ENCODE measurements at regions of chr2 and their contacts with region 1.

Region 1: DNA sequence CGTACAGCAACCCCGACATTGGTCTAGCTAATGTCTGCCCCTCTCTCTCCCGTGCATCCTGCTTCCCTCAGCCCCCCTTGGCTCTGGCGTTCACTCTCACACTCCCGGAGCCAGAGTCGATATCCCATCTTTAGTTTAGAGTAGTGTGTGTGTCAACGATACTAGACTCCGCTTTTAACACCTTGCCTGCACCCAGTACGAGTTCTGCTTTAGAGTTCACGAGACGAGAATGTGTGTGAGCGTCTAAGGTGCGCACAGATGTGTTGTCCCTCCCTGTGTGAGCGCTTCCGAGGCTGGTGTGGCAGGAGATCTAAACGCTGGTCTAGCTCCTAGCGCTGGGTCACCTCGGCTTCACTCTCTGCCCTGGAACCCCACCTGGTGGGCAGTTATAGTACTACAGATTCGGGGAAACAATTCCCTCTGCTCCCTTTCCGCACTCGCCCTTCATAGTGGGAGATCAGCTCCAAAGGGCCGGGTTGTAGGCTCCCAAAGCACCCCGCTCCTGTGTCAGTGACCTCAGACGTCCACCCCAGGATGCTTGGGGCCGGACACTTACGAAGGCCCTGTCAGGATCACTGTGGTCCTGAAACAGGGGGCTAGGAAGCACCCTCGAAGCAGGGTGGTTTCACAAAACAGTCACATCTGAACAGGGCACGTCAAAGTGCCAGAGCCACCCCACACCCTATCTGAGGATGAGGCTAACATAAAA is 2.6 kb upstream of the CYP26B1 start:
- DNase-seq: peak; percentile 95
- H3K4me3 ChIP-seq: peak overlapping the region; percentile 52 to 61 (median 56)
- H3K27ac ChIP-seq: no peak overlapping the region
- H3K4me1 ChIP-seq: peaks cover 40 to 52% (median 49%) of the 10 kb centered on the region in 4 donors
- H3K27me3 ChIP-seq: peaks cover 11 to 85% (median 40%) of the 10 kb centered on the region in 4 donors
- CTCF ChIP-seq: peak; percentile 86 to 91 (median 88)
- EP300 ChIP-seq: no peak
- POLR2A ChIP-seq: no peak

Region 2: GRCh38 chr2:71545572-71546274 is 604.6 kb before region 1 on chr2:
- intact Hi-C with region 1: loop called (anchors 5 kb)
- DNase-seq: no peak
- H3K4me3 ChIP-seq: peak overlapping the region in 2 of 4 donors; percentile 23 to 32
- H3K27ac ChIP-seq: peak overlapping the region in 3 of 4 donors; percentile 26 to 55 (median 50)
- H3K4me1 ChIP-seq: peaks cover 3 to 13% (median 10%) of the 10 kb centered on the region in 4 donors
- H3K27me3 ChIP-seq: no peaks in the 10 kb centered on the region
- CTCF ChIP-seq: peak; percentile 55 to 67 (median 57)
- EP300 ChIP-seq: no peak
- POLR2A ChIP-seq: no peak

Region 3: DNA sequence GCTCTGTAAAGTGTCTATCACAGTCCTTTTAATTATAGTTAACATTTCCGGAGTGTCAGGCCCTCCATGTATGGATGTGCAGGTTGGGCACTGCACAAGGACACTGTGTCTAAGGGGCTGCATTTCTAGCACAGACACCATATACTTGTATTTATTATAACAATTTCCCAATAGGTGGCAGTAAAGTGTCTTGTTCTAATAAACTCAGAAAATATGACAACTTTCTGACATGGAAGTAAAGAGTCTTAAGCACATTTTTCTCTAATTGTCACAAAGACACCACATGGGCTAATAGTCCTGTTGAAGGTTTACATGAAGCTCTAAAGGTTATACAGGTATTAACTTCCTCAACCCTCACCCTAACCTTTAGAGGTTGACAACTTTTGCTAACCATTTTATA is 540.4 kb before region 1 on chr2:
- intact Hi-C with region 1: loop called (anchors 5 kb)
- DNase-seq: no peak
- H3K4me3 ChIP-seq: no peak overlapping the region
- H3K27ac ChIP-seq: no peak overlapping the region
- H3K4me1 ChIP-seq: peaks cover 17 to 24% (median 21%) of the 10 kb centered on the region in 4 donors
- H3K27me3 ChIP-seq: no peaks in the 10 kb centered on the region
- CTCF ChIP-seq: peak in 2 of 3 experiments; percentile 31 to 33
- EP300 ChIP-seq: no peak
- POLR2A ChIP-seq: no peak

Region 4: DNA sequence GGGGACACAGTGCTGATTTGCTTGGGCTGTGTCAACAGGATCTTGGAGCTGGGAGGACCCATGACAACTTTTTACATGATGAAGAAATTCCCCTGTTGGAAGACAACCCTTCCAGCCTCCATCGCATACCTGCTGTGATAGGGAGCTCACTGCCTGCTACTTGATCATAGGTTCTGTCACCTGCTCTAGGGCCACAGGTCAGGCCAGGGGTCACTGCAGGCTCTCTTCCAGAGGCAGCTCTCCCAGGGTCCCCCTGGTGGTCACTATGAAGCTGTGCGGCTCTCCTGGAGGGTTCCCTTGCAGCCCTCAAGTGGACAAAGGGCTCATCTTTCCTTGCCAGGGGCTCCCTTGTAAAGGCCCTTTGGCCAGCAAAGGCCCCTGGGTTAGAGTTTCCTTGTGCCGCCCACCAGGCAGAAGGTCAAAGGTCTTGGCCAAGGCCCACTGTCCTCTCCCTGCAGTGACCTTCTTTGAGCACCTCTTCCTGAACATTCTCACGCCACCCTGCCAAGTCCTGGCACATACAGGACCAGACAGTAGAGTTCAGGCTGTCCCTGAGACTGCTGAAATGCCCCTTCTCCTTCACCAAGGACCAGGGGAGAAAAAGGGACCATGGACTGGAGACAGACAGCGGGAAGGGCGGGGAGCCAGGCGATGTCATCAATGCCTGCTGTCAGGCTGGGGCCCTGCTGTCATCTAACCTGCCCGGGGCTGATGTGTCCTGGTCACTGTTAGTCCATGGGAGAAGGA is 351.9 kb before region 1 on chr2:
- intact Hi-C with region 1: loop called (anchors 5 kb)
- DNase-seq: no peak
- H3K4me3 ChIP-seq: no peak overlapping the region
- H3K27ac ChIP-seq: no peak overlapping the region
- H3K4me1 ChIP-seq: peaks cover 0 to 5% (median 2%) of the 10 kb centered on the region in 4 donors
- H3K27me3 ChIP-seq: no peaks in the 10 kb centered on the region
- CTCF ChIP-seq: peak; percentile 57 to 70 (median 58)
- EP300 ChIP-seq: no peak
- POLR2A ChIP-seq: no peak

Region 5: DNA sequence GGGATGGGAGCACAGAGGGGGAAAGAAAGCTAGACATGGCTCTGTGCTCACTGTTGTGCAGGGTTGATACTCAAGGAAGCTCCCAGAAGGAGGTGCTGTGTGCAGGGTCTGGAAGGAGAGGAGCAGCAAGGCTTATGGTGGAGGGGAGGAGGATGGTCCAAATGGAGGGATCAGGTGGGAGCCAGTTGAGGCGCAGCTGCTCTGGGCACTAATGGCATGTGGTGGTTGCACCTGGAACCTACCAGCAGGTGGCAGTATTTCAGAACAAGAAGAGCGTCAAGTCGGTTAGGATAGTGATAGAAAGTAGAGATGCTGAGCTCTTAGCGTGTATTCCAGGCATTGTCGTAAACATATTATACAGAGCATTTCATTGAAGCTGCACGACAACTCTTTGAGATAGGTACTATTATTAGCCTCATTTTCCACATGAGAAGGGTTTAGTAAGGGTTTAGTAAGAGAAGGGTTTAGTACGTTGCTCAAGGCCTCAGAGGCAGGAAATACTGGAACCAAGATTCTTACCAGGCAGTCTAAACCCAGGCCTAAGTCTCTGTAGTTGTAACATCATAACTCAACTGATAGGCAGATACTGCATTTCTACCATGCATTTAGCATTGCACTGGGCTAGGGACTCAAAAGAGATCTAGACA is 226.3 kb before region 1 on chr2:
- intact Hi-C with region 1: loop called (anchors 5 kb)
- DNase-seq: peak; percentile 92
- H3K4me3 ChIP-seq: no peak overlapping the region
- H3K27ac ChIP-seq: no peak overlapping the region
- H3K4me1 ChIP-seq: no peaks in the 10 kb centered on the region
- H3K27me3 ChIP-seq: no peaks in the 10 kb centered on the region
- CTCF ChIP-seq: peak; percentile 67 to 86 (median 80)
- EP300 ChIP-seq: no peak
- POLR2A ChIP-seq: no peak

Region 6: GRCh38 chr2:72579591-72580180 is 429.4 kb after region 1 on chr2:
- intact Hi-C with region 1: loop called (anchors 5 kb)
- DNase-seq: no peak
- H3K4me3 ChIP-seq: no peak overlapping the region
- H3K27ac ChIP-seq: no peak overlapping the region
- H3K4me1 ChIP-seq: peaks cover 0 to 22% (median 18%) of the 10 kb centered on the region in 4 donors
- H3K27me3 ChIP-seq: no peaks in the 10 kb centered on the region
- CTCF ChIP-seq: peak; percentile 66 to 67 (median 66)
- EP300 ChIP-seq: no peak
- POLR2A ChIP-seq: no peak

Region 7: DNA sequence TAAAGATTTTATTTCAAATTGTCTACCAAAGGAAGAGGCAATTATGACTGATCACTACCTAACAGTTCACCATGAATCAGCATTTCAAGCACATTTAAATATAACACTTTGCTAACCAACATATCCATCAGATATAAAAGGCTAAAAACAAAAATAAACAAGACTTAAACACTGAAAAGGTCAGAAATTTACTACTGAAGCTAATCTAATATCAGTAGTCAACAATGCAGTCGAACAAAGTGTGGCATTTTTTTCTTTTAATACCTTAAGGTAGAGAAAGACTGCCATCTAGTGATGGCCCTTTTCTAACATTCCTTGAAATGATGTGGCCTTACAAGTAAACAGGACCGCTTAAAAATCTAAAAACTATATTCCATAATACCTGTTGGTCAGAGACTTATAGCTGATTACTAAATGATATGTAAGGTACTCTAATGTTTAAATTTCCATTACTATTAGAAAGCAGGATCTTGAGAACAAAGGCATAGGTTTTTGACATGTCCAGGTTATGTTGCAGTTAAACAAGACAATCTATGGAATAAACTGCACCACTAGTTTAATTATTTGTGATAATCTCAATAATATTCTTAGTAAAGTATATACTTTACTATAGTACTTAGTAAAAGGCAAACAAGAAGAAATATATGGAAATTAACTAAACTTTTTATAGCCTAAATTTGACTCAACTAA is 595.5 kb after region 1 on chr2:
- intact Hi-C with region 1: loop called (anchors 10 kb)
- DNase-seq: no peak
- H3K4me3 ChIP-seq: no peak overlapping the region
- H3K27ac ChIP-seq: no peak overlapping the region
- H3K4me1 ChIP-seq: peaks cover 0 to 10% (median 3%) of the 10 kb centered on the region in 4 donors
- H3K27me3 ChIP-seq: no peaks in the 10 kb centered on the region
- CTCF ChIP-seq: peak; percentile 64 to 67 (median 65)
- EP300 ChIP-seq: no peak
- POLR2A ChIP-seq: no peak